Activated CD4-positive, alpha-beta T cell treated with anti-CD3 and anti-CD28 coated beads for 36 hours (primary cell): ENCODE measurements at regions of chr3 and their contacts with region 1.

Region 1: GRCh38 chr3:143045639-143046038 is 44.3 kb downstream of the U2SURP start:
- DNase-seq: no peak
- ATAC-seq: no peak
- H3K4me3 Mint-ChIP-seq: no peak overlapping the region
- H3K27ac Mint-ChIP-seq: no peak overlapping the region
- H3K4me1 Mint-ChIP-seq: no peaks in the 10 kb centered on the region
- H3K27me3 Mint-ChIP-seq: no peaks in the 10 kb centered on the region

Region 2: GRCh38 chr3:143024351-143024960 is 21.2 kb before region 1 on chr3:
- CTCF ChIA-PET with region 1: interaction called, 20 read pairs
- POLR2A ChIA-PET with region 1: no interaction called
- intact Hi-C with region 1: loop called in 1 of 2 experiments (anchors 2 kb)
- DNase-seq: no peak
- ATAC-seq: no peak
- H3K4me3 Mint-ChIP-seq: no peak overlapping the region
- H3K27ac Mint-ChIP-seq: no peak overlapping the region
- H3K4me1 Mint-ChIP-seq: no peaks in the 10 kb centered on the region
- H3K27me3 Mint-ChIP-seq: no peaks in the 10 kb centered on the region

Region 3: GRCh38 chr3:143380449-143380848 is 334.8 kb after region 1 on chr3:
- CTCF ChIA-PET with region 1: no interaction called
- POLR2A ChIA-PET with region 1: no interaction called
- intact Hi-C with region 1: no loop called
- DNase-seq: no peak
- ATAC-seq: no peak
- H3K4me3 Mint-ChIP-seq: no peak overlapping the region
- H3K27ac Mint-ChIP-seq: no peak overlapping the region
- H3K4me1 Mint-ChIP-seq: peaks cover 8% of the 10 kb centered on the region
- H3K27me3 Mint-ChIP-seq: no peaks in the 10 kb centered on the region